ENCODE measurements at regions of chr2 and their contacts with region 1.

Region 1: GRCh38 chr2:52964916-52965530 is 802.6 kb upstream of the CHAC2 start:
- DNase-seq: no peak
- ATAC-seq: no peak
- H3K4me3 ChIP-seq: no peak overlapping the region
- H3K27ac ChIP-seq: no peak overlapping the region
- H3K4me1 ChIP-seq: no peaks in the 10 kb centered on the region
- H3K27me3 ChIP-seq: no peaks in the 10 kb centered on the region
- CTCF ChIP-seq: no peak
- EP300 ChIP-seq: no peak
- POLR2A ChIP-seq: no peak
- RAD21 ChIP-seq: no peak

Region 2: GRCh38 chr2:52904355-52904891 is 60.6 kb before region 1 on chr2:
- CTCF ChIA-PET with region 1: no interaction called
- POLR2A ChIA-PET with region 1: no interaction called
- RAD21 ChIA-PET with region 1: no interaction called
- SMC1A ChIA-PET with region 1: no interaction called
- in situ Hi-C with region 1: no loop called
- intact Hi-C with region 1: loop called (anchors 5 kb)
- DNase-seq: no peak
- ATAC-seq: no peak
- H3K4me3 ChIP-seq: no peak overlapping the region
- H3K27ac ChIP-seq: no peak overlapping the region
- H3K4me1 ChIP-seq: no peaks in the 10 kb centered on the region
- H3K27me3 ChIP-seq: no peaks in the 10 kb centered on the region
- CTCF ChIP-seq: no peak
- EP300 ChIP-seq: no peak
- POLR2A ChIP-seq: no peak
- RAD21 ChIP-seq: no peak

Measured in GM12878 (cell line).